Heart left ventricle (tissue), 16 donors: ENCODE measurements at regions of chr2 and their contacts with region 1.

Region 1: GRCh38 chr2:100235098-100235497 is 87.2 kb downstream of the LONRF2 start:
- DNase-seq: no peak
- ATAC-seq: no peak
- H3K4me3 ChIP-seq: no peak overlapping the region
- H3K27ac ChIP-seq: no peak overlapping the region
- H3K4me1 ChIP-seq: no peaks in the 10 kb centered on the region
- H3K27me3 ChIP-seq: no peaks in the 10 kb centered on the region
- CTCF ChIP-seq: no peak
- POLR2A ChIP-seq: no peak

Region 2: GRCh38 chr2:98883780-98884211 is 1351.3 kb before region 1 on chr2:
- intact Hi-C with region 1: no loop called
- DNase-seq: no peak
- ATAC-seq: no peak
- H3K4me3 ChIP-seq: no peak overlapping the region
- H3K27ac ChIP-seq: no peak overlapping the region
- H3K4me1 ChIP-seq: no peaks in the 10 kb centered on the region
- H3K27me3 ChIP-seq: peaks cover 0 to 5% (median 0%) of the 10 kb centered on the region in 9 donors
- CTCF ChIP-seq: no peak
- POLR2A ChIP-seq: no peak

Region 3: GRCh38 chr2:100113990-100114433 is 121.1 kb before region 1 on chr2:
- intact Hi-C with region 1: loop called in 2 of 10 experiments (anchors 10 kb)
- DNase-seq: no peak
- ATAC-seq: no peak
- H3K4me3 ChIP-seq: no peak overlapping the region
- H3K27ac ChIP-seq: no peak overlapping the region
- H3K4me1 ChIP-seq: no peaks in the 10 kb centered on the region
- H3K27me3 ChIP-seq: no peaks in the 10 kb centered on the region
- CTCF ChIP-seq: no peak
- POLR2A ChIP-seq: no peak

Region 4: DNA sequence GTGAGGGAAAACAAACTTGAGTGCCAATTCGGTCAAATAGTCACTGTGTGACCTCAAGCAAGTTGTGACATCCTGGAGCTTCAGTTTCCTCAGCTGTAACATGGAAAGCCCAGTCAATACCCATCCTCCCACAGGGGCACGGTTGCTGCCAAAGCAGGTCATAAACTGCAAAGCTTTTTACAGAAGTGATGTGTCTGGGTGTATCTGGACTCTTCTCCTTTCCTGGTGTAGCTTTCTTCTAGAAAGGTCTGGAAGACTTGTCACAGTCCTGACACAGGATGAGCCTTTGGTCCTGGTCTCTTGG is 88.5 kb before region 1 on chr2:
- intact Hi-C with region 1: no loop called
- DNase-seq: no peak
- ATAC-seq: no peak
- H3K4me3 ChIP-seq: no peak overlapping the region
- H3K27ac ChIP-seq: no peak overlapping the region
- H3K4me1 ChIP-seq: no peaks in the 10 kb centered on the region
- H3K27me3 ChIP-seq: no peaks in the 10 kb centered on the region
- CTCF ChIP-seq: no peak
- POLR2A ChIP-seq: no peak

Region 5: GRCh38 chr2:100178051-100178788 is 56.9 kb before region 1 on chr2:
- intact Hi-C with region 1: loop called in 5 of 10 experiments (anchors 2 to 10 kb)
- DNase-seq: no peak
- ATAC-seq: peak in 2 of 4 donors; percentile 26 to 38
- H3K4me3 ChIP-seq: no peak overlapping the region
- H3K27ac ChIP-seq: no peak overlapping the region
- H3K4me1 ChIP-seq: peaks cover 0 to 11% (median 0%) of the 10 kb centered on the region in 12 donors
- H3K27me3 ChIP-seq: no peaks in the 10 kb centered on the region
- CTCF ChIP-seq: peak in 11 of 12 donors; percentile 9 to 51 (median 35)
- POLR2A ChIP-seq: no peak